ENCODE measurements at regions of chr3 and their contacts with region 1.

Region 1: GRCh38 chr3:158659454-158660237 is 12.8 kb downstream of the LXN start:
- DNase-seq: peak; percentile 21
- H3K4me3 ChIP-seq: no peak overlapping the region
- CTCF ChIP-seq: peak; percentile 66

Region 2: GRCh38 chr3:158379517-158379916 is 280.1 kb before region 1 on chr3:
- CTCF ChIA-PET with region 1: no interaction called
- POLR2A ChIA-PET with region 1: no interaction called
- DNase-seq: no peak
- H3K4me3 ChIP-seq: no peak overlapping the region
- CTCF ChIP-seq: no peak

Region 3: DNA sequence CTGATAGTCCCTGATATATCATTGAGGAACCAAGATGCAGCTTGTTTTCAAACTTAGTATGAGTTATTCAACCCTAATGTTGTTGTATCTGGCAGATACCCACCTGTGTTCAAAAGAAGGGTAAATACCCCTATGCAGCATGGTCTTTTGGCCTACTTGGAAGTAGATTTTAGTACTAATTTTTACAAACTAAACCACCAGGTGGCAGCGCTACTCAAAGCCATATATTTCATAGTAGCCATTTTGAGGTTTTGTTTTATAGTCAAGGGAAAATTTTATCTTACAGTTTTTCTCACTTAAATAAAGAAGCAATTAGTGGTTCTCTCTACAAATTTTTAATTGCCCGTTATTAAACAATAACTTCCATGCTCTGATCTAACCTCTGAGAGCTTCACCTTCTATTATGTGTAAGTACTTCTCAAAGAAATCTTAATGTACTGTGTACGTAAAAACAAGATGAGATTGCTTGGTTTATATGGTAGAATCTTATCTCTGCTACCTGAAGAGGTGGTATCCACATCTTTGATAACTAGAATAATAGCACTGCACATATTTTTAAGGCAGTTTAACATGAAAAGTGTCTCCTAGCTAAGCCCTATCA is 120.1 kb before region 1 on chr3:
- CTCF ChIA-PET with region 1: interaction called, 36 read pairs
- POLR2A ChIA-PET with region 1: no interaction called
- DNase-seq: no peak
- H3K4me3 ChIP-seq: no peak overlapping the region
- CTCF ChIP-seq: peak; percentile 52

Region 4: GRCh38 chr3:158672293-158673176 is 12.9 kb after region 1 on chr3 and contains the start of gene LXN:
- CTCF ChIA-PET with region 1: interaction called, 39 read pairs
- POLR2A ChIA-PET with region 1: no interaction called
- DNase-seq: peak; percentile 33
- H3K4me3 ChIP-seq: peak within 1 kb of the TSS; percentile 71
- CTCF ChIP-seq: peak; percentile 96

Region 5: DNA sequence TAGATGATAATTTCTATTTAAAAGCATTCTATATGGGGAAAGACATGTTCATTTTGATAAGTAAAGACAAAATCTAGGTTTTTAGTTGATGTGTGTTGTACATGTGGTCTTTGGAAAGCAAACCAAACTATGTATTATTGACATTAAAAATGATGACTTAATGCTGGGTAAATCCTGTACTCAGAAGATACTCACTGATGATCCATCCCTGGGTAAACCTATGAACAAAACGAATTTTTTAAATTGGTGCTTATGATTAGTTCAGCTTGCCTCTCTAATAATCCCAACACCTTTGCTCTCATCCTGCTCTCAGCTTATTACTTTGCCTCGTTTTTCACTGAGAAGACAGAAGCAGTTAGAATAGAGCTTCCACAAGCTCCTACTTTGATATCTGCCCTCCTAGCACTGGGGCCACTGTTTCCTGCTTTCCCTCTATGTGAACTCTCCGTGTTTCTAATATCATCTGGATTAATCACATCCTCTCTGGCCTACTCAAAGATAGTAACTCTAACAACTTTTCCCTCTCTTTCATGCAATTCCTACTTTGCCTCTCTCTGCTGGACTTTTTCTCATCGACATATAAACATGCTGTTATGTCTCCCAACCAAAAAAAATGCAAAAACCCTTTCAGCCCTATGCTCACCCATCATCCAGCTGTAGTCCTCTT is 43.3 kb after region 1 on chr3:
- CTCF ChIA-PET with region 1: interaction called, 20 read pairs
- POLR2A ChIA-PET with region 1: no interaction called
- DNase-seq: no peak
- H3K4me3 ChIP-seq: no peak overlapping the region
- CTCF ChIP-seq: no peak

Region 6: DNA sequence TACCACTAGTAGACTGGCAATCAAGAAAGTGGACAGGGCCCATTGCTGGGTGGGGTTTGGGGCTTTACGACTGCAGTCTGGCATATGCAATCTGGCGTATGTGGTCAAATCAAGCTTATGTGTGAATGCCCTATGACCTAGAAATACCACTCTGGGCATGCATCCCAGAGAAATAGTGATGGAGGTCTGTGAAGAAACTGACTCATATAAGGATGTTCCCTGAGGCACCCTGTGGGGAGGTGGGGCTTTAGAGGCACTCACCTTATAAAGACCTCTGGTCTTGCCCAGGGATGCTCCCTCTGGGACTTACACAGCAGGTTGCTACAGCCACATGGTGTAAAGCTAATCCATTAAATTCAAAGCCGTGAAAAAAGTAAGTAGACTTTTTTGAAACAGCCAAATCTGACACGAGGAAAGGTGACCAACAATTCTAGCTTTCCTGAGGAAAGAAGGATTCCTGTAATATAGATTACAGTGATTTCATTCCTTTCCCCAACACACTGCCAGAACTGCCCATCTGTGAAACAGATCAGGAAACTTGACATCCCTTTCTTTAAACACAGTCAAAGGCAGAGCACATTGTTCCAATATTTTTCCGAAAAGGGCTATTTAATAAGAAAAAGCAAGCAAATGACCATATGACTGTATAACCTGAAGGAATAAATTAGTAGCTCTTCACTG is 59.0 kb after region 1 on chr3:
- CTCF ChIA-PET with region 1: interaction called, 14 read pairs
- POLR2A ChIA-PET with region 1: interaction called, 3 read pairs
- DNase-seq: peak; percentile 91
- H3K4me3 ChIP-seq: no peak overlapping the region
- CTCF ChIP-seq: no peak

Region 7: GRCh38 chr3:158775426-158776410 is 116.1 kb after region 1 on chr3:
- CTCF ChIA-PET with region 1: interaction called, 25 read pairs
- POLR2A ChIA-PET with region 1: no interaction called
- DNase-seq: no peak
- H3K4me3 ChIP-seq: no peak overlapping the region
- CTCF ChIP-seq: no peak

Region 8: GRCh38 chr3:159260049-159260662 is 600.5 kb after region 1 on chr3:
- CTCF ChIA-PET with region 1: interaction called, 17 read pairs
- POLR2A ChIA-PET with region 1: no interaction called
- DNase-seq: peak; percentile 69
- H3K4me3 ChIP-seq: no peak overlapping the region
- CTCF ChIP-seq: peak; percentile 54

Measured in AG04449 (cell line).